ENCODE measurements at regions of chr16 and their contacts with region 1.

Region 1: DNA sequence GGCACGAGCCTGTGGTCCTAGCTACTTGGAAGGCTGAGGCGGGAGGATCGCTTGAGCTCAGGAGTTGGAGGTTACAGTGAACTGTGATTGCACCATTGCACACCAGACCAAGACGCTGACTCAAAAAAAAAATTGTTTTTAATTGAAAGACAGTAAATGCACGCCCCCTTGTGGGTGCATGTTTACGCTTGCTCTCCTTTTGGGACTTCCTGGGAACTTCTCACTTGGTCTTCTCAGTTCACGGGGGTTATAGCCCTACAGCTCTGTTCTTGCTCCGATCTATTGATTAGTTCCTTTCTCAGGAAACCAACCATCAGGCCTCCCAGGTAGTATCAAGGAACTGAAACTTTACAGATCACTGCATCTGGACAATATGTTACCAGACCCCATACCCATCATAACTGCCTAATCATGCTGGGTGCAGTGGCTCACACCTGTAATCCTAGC is 14.2 kb upstream of the RIPOR1 start:
- DNase-seq: peak; percentile 57 to 92 (median 77)
- ATAC-seq: peak; percentile 76 to 88 (median 79)
- H3K4me3 ChIP-seq: no peak overlapping the region
- H3K4me3 Mint-ChIP-seq: no peak overlapping the region
- H3K27ac ChIP-seq: no peak overlapping the region
- H3K27ac Mint-ChIP-seq: peak overlapping the region in 1 of 2 donors; percentile 52
- H3K4me1 ChIP-seq: peaks cover 0 to 36% of the 10 kb centered on the region in 2 experiments
- H3K4me1 Mint-ChIP-seq: peaks cover 15 to 34% (median 27%) of the 10 kb centered on the region in 3 donors
- H3K27me3 ChIP-seq: no peaks in the 10 kb centered on the region
- H3K27me3 Mint-ChIP-seq: no peaks in the 10 kb centered on the region

Region 2: GRCh38 chr16:67137605-67138004 is 376.8 kb before region 1 on chr16:
- CTCF ChIA-PET with region 1: interaction called in 1 of 2 experiments, 11 read pairs
- POLR2A ChIA-PET with region 1: no interaction called
- DNase-seq: no peak
- ATAC-seq: no peak
- H3K4me3 ChIP-seq: no peak overlapping the region
- H3K4me3 Mint-ChIP-seq: no peak overlapping the region
- H3K27ac ChIP-seq: no peak overlapping the region
- H3K27ac Mint-ChIP-seq: no peak overlapping the region
- H3K4me1 ChIP-seq: no peaks in the 10 kb centered on the region
- H3K4me1 Mint-ChIP-seq: no peaks in the 10 kb centered on the region
- H3K27me3 ChIP-seq: peaks cover 0 to 2% of the 10 kb centered on the region in 2 experiments
- H3K27me3 Mint-ChIP-seq: no peaks in the 10 kb centered on the region

Region 3: DNA sequence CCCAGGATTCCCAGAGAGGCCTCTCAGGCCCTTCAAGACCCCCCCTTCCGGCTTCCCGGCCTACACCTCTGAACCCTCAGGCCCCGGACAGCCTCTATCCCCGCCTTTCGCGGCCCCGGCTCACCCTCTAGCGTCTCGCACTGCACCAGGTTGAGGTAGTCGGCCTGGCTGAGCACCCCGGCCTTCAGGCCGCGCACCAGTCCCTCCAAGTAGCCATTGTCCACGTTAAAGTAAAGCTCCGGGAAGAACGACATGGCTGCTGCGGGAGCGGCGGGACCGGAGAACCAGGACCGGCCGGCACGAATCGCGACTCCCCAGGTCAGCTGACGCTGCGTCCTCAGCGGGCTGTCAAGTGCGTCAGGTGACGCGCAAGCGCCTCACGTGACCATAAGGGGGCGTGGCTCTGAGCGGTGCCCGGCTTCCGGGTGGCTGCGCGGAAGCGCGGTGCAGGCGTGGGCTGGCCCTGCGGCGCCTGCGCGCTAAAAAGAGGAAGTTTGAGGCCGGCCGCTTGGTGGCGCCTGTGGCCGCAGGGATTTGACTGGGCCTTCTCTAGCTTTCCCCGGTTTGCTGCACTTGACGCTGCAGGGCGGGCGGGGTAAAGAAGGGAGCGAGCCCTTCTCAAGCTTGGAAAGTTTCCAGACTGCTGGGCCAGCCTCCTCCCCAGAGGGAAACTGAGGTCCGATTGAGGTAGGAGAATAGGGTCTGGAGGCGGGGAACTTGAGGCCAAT is 33.4 kb before region 1 on chr16 and contains the start of gene ATP6V0D1:
- CTCF ChIA-PET with region 1: interaction called, 4 to 21 read pairs
- POLR2A ChIA-PET with region 1: interaction called in 1 of 2 experiments, 5 read pairs
- DNase-seq: peak; percentile 96 to 99 (median 98)
- ATAC-seq: peak; percentile 89 to 95 (median 92)
- H3K4me3 ChIP-seq: peak within 1 kb of the TSS; percentile 93 to 100
- H3K4me3 Mint-ChIP-seq: peak within 1 kb of the TSS; percentile 93 to 97 (median 95)
- H3K27ac ChIP-seq: peak within 1 kb of the TSS; percentile 98
- H3K27ac Mint-ChIP-seq: peak within 1 kb of the TSS; percentile 92 to 99
- H3K4me1 ChIP-seq: peaks cover 5 to 51% of the 10 kb centered on the region in 2 experiments
- H3K4me1 Mint-ChIP-seq: peaks cover 49 to 68% (median 54%) of the 10 kb centered on the region in 3 donors
- H3K27me3 ChIP-seq: no peaks in the 10 kb centered on the region
- H3K27me3 Mint-ChIP-seq: no peaks in the 10 kb centered on the region
- total RNA-seq, gene ATP6V0D1: 41.5 to 49.6 (median 45.8) TPM

Region 4: DNA sequence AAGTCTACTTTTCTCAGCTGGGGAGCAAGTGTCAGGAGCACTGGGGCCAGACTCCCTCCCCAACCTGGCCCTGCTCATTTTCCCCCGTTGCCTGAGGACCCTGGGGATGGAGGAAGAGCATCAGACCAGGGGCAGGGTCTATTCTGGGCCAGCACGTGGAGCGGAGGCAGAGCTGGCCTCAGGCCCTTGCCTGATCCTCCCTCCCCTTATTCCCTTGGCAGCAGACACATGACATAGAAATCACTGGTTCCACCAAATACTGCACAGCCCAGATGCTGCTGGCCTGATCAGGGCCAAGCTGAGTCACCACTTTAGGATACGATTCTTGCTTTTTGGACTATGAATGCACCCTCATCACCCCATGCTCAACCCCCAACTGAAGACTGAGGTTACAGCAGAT is 15.3 kb before region 1 on chr16:
- CTCF ChIA-PET with region 1: interaction called, 8 to 10 read pairs
- POLR2A ChIA-PET with region 1: interaction called in 1 of 2 experiments, 6 read pairs
- DNase-seq: no peak
- ATAC-seq: no peak
- H3K4me3 ChIP-seq: no peak overlapping the region
- H3K4me3 Mint-ChIP-seq: no peak overlapping the region
- H3K27ac ChIP-seq: no peak overlapping the region
- H3K27ac Mint-ChIP-seq: peak overlapping the region; percentile 41 to 63
- H3K4me1 ChIP-seq: peaks cover 6 to 16% of the 10 kb centered on the region in 2 experiments
- H3K4me1 Mint-ChIP-seq: peaks cover 15 to 37% (median 25%) of the 10 kb centered on the region in 3 donors
- H3K27me3 ChIP-seq: no peaks in the 10 kb centered on the region
- H3K27me3 Mint-ChIP-seq: no peaks in the 10 kb centered on the region

Region 5: DNA sequence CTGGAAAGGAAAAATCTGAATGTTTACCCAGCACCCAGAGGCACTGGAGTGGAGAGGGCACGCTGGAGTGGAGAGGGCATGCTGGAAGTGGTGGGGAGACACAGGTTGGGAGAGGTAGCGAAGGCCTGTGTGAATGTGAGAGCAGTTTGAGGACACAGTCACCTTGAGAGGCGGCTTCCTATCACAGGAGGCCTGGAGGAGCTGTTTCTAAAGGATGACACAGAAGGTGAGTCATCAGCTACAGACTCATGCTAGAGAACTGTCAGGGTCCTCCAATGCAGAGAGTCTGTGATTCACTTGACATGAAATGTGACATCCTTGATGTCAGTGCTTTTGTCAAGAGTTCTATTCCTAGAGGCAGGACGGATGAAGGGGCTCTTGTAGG is 403.4 kb after region 1 on chr16:
- CTCF ChIA-PET with region 1: no interaction called
- POLR2A ChIA-PET with region 1: no interaction called
- DNase-seq: no peak
- ATAC-seq: peak in 3 of 4 experiments; percentile 81 to 98 (median 97)
- H3K4me3 ChIP-seq: no peak overlapping the region
- H3K4me3 Mint-ChIP-seq: no peak overlapping the region
- H3K27ac ChIP-seq: no peak overlapping the region
- H3K27ac Mint-ChIP-seq: peak overlapping the region in 1 of 2 donors; percentile 58
- H3K4me1 ChIP-seq: peaks cover 0 to 23% of the 10 kb centered on the region in 2 experiments
- H3K4me1 Mint-ChIP-seq: peaks cover 32 to 42% (median 38%) of the 10 kb centered on the region in 3 donors
- H3K27me3 ChIP-seq: no peaks in the 10 kb centered on the region
- H3K27me3 Mint-ChIP-seq: no peaks in the 10 kb centered on the region

Measured in T-cell (primary cell).